Activated naive CD8-positive, alpha-beta T cell treated with anti-CD3 and anti-CD28 coated beads, Interleukin-2, amount 10 ng/mL, durations not matched to agents 7 days and 5 days (primary cell): ENCODE measurements at regions of chr2 and their contacts with region 1.

Region 1: DNA sequence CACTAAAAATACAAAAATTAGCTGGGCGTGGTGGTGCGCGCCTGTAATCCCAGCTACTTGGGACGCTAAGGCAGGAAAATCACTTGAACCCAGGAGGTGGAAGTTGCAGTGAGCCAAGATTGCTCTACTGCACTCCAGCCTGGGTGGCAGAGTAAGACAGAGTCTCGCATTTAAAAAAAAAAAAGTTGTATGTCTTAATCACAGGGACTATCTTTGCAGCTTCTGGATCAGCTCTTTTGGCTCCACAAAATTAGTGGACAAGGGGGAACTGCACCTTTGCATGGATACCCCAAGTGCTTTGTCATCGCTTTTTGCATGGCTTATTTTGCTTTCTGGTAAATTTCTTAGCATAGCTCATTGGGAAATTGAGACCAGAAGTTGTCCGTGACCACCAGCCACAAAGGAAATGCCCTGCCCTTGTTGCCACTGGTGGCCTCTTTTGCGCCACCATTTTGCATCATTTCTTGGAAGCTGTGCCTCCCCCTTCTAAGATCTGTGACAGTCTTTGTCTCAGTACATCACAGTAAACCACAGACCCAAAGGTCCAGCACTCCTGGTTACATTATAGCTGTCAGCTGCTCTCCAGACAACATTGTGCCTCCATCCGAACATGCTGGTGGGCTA is 43.9 kb upstream of the PCBP1 start:
- DNase-seq: peak; percentile 61
- ATAC-seq: peak; percentile 86
- H3K4me3 Mint-ChIP-seq: peak overlapping the region; percentile 75
- H3K27ac Mint-ChIP-seq: peak overlapping the region; percentile 94
- H3K4me1 Mint-ChIP-seq: peaks cover 56% of the 10 kb centered on the region
- H3K27me3 Mint-ChIP-seq: no peaks in the 10 kb centered on the region

Region 2: GRCh38 chr2:69973335-69973735 is 70.0 kb before region 1 on chr2:
- POLR2A ChIA-PET with region 1: no interaction called
- DNase-seq: no peak
- ATAC-seq: no peak
- H3K4me3 Mint-ChIP-seq: no peak overlapping the region
- H3K27ac Mint-ChIP-seq: no peak overlapping the region
- H3K4me1 Mint-ChIP-seq: peaks cover 10% of the 10 kb centered on the region
- H3K27me3 Mint-ChIP-seq: peaks cover 2% of the 10 kb centered on the region

Region 3: GRCh38 chr2:70029814-70030409 is 13.5 kb before region 1 on chr2:
- POLR2A ChIA-PET with region 1: no interaction called
- DNase-seq: no peak
- ATAC-seq: no peak
- H3K4me3 Mint-ChIP-seq: no peak overlapping the region
- H3K27ac Mint-ChIP-seq: no peak overlapping the region
- H3K4me1 Mint-ChIP-seq: peaks cover 13% of the 10 kb centered on the region
- H3K27me3 Mint-ChIP-seq: no peaks in the 10 kb centered on the region

Region 4: GRCh38 chr2:70070541-70071268 is 27.3 kb after region 1 on chr2:
- POLR2A ChIA-PET with region 1: interaction called, 24 read pairs
- DNase-seq: no peak
- ATAC-seq: peak; percentile 76
- H3K4me3 Mint-ChIP-seq: peak overlapping the region; percentile 77
- H3K27ac Mint-ChIP-seq: peak overlapping the region; percentile 96
- H3K4me1 Mint-ChIP-seq: peaks cover 40% of the 10 kb centered on the region
- H3K27me3 Mint-ChIP-seq: no peaks in the 10 kb centered on the region